ENCODE measurements at regions of chr7 and their contacts with region 1.

Region 1: GRCh38 chr7:66859794-66860645 is 61.0 kb upstream of the TMEM248 start:
- DNase-seq: no peak
- ATAC-seq: no peak
- H3K4me3 ChIP-seq: no peak overlapping the region
- H3K27ac ChIP-seq: no peak overlapping the region
- H3K4me1 ChIP-seq: no peaks in the 10 kb centered on the region
- H3K27me3 ChIP-seq: no peaks in the 10 kb centered on the region

Region 2: DNA sequence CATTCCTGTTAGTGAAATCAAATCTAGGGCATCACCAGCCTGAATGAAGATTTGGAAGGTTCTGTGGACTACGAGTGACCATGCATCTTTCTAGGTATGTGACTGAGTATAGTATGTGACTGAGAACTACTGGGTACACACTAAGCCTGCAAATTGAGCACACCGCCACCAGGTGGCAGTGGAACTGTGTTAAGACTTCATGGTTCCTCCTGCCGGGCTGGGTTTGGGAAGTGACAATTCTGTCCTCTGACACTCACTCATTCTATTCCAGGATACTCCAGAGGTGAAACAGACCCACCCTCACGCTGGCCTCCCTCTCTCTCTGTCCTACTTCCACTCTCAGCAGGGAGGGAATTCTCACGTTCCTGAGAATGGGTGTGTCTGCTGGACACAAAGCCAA is 23.0 kb before region 1 on chr7:
- intact Hi-C with region 1: no loop called
- DNase-seq: peak in 1 of 2 donors; percentile 45
- ATAC-seq: no peak
- H3K4me3 ChIP-seq: no peak overlapping the region
- H3K27ac ChIP-seq: no peak overlapping the region
- H3K4me1 ChIP-seq: no peaks in the 10 kb centered on the region
- H3K27me3 ChIP-seq: no peaks in the 10 kb centered on the region

Region 3: GRCh38 chr7:66877577-66878300 is 17.7 kb after region 1 on chr7:
- intact Hi-C with region 1: loop called in 1 of 2 experiments (anchors 2 kb)
- DNase-seq: no peak
- ATAC-seq: no peak
- H3K4me3 ChIP-seq: no peak overlapping the region
- H3K27ac ChIP-seq: no peak overlapping the region
- H3K4me1 ChIP-seq: no peaks in the 10 kb centered on the region
- H3K27me3 ChIP-seq: no peaks in the 10 kb centered on the region